AG04449 (cell line): ENCODE measurements at regions of chr11 and their contacts with region 1.

Region 1: DNA sequence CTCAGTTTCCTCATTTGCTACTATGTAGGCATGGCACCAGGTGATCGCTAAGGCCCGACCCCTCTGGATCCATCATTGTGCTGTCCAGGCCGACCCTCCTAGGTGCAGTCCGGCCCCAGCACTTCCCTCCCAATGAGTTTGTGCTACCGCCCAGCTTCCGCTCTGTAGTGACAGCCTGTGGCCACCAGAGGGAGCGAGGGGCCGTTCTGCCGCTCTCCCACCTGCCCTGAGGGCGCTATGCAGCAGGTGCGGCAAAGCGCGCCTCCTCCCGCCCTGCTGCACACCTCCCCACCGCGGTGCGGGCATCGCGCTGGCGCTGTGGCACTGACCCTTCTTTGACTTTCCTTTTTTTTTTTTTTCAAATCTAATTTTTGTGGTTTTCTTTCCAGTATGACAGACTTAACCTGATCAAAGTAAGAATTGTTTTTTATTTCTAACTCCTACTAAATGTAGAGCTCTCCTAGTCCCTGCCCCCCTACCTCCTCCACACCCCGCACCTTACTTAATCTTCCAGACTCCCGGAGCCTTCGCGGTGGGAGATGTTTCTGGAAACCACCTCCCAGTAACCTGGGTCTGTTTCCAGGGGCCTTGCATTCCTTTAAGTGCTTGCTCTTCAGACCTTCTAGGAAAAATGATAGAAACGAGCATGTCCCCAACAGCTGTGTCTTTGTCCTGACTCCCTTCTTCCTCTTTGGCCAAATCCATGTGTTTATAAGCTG is 73.7 kb downstream of the SCN3B start:
- DNase-seq: no peak
- H3K4me3 ChIP-seq: no peak overlapping the region
- CTCF ChIP-seq: peak; percentile 98

Region 2: DNA sequence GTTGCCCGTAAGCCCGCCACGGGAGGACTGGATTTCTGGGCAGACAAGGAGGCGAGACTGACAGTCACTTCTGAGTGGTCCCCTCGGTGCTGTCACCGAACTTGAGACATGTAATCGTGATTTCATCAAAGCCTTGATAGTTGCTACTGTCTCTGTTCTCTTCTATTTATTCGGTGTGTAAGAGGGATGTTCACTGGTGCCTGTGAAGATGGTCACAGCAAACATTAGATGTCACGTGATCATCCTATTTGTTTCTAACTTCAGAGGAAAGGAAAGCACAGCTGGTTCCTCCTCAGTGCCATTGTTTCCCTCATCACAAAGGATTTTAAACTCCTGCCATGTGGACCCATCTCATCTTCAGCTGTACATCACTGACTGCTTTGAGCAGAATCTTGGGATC is 312.6 kb before region 1 on chr11:
- CTCF ChIA-PET with region 1: no interaction called
- POLR2A ChIA-PET with region 1: no interaction called
- DNase-seq: no peak
- H3K4me3 ChIP-seq: no peak overlapping the region
- CTCF ChIP-seq: no peak

Region 3: GRCh38 chr11:123357961-123358841 is 222.5 kb before region 1 on chr11:
- CTCF ChIA-PET with region 1: no interaction called
- POLR2A ChIA-PET with region 1: no interaction called
- DNase-seq: no peak
- H3K4me3 ChIP-seq: peak overlapping the region; percentile 49
- CTCF ChIP-seq: no peak

Region 4: GRCh38 chr11:123494195-123495050 is 86.3 kb before region 1 on chr11:
- CTCF ChIA-PET with region 1: interaction called, 20 read pairs
- POLR2A ChIA-PET with region 1: no interaction called
- DNase-seq: no peak
- H3K4me3 ChIP-seq: no peak overlapping the region
- CTCF ChIP-seq: no peak

Region 5: GRCh38 chr11:123511037-123511870 is 69.5 kb before region 1 on chr11:
- CTCF ChIA-PET with region 1: interaction called, 94 read pairs
- POLR2A ChIA-PET with region 1: no interaction called
- DNase-seq: peak; percentile 70
- H3K4me3 ChIP-seq: peak overlapping the region; percentile 25
- CTCF ChIP-seq: peak; percentile 95

Region 6: GRCh38 chr11:123525511-123525918 is 55.2 kb before region 1 on chr11:
- CTCF ChIA-PET with region 1: interaction called, 66 read pairs
- POLR2A ChIA-PET with region 1: no interaction called
- DNase-seq: no peak
- H3K4me3 ChIP-seq: no peak overlapping the region
- CTCF ChIP-seq: no peak

Region 7: GRCh38 chr11:123547180-123547579 is 33.5 kb before region 1 on chr11:
- CTCF ChIA-PET with region 1: interaction called, 22 read pairs
- POLR2A ChIA-PET with region 1: no interaction called
- DNase-seq: no peak
- H3K4me3 ChIP-seq: no peak overlapping the region
- CTCF ChIP-seq: no peak

Region 8: DNA sequence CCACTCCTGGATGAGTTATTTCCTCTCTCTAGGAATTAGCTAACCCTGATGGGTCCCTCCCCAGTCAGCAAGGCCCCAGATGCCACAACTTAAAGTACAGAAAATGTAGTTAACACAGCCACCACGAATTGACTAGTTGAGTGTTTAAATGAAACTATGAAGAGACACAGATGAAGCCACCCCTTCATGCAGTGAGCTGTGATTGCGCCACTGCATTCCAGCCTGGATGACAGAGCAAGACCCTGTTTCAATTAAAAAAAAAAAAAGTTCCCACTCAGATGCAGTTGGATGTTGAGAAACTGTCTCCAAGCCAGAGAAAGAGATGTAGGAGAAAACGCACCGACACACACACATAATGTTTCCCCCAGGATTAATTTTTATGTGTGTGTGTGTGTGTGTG is 20.4 kb after region 1 on chr11:
- CTCF ChIA-PET with region 1: interaction called, 30 read pairs
- POLR2A ChIA-PET with region 1: no interaction called
- DNase-seq: peak; percentile 42
- H3K4me3 ChIP-seq: no peak overlapping the region
- CTCF ChIP-seq: no peak

Region 9: DNA sequence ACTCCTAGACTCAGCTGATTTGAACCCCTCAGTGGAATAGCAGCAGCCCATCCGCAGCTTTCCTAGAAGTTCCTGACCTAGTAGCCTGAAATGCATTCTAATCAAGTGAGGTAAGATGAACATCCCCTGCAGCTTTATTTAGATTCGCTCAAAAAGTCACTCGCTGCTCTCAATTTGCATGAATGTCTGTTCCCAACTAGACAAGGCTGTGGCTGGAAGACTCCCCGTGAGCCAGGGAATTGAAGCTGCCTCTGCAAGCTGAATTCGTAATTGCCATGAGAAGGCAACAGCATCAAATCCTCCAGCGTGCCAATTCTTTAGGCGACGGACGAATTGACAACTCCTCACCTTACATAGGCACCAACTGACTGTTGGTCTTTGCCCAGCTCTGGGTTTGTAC is 90.8 kb after region 1 on chr11:
- CTCF ChIA-PET with region 1: no interaction called
- POLR2A ChIA-PET with region 1: no interaction called
- DNase-seq: no peak
- H3K4me3 ChIP-seq: no peak overlapping the region
- CTCF ChIP-seq: no peak